Natural killer cell (primary cell): ENCODE measurements at regions of chr9 and their contacts with region 1.

Region 1: GRCh38 chr9:73451003-73451402 is 299.3 kb downstream of the ANXA1 start:
- DNase-seq: no peak
- ATAC-seq: no peak
- H3K4me3 ChIP-seq: no peak overlapping the region
- H3K4me3 Mint-ChIP-seq: no peak overlapping the region
- H3K27ac ChIP-seq: no peak overlapping the region
- H3K27ac Mint-ChIP-seq: no peak overlapping the region
- H3K4me1 ChIP-seq: no peaks in the 10 kb centered on the region
- H3K4me1 Mint-ChIP-seq: no peaks in the 10 kb centered on the region
- H3K27me3 ChIP-seq: no peaks in the 10 kb centered on the region
- H3K27me3 Mint-ChIP-seq: no peaks in the 10 kb centered on the region
- CTCF ChIP-seq: no peak

Region 2: DNA sequence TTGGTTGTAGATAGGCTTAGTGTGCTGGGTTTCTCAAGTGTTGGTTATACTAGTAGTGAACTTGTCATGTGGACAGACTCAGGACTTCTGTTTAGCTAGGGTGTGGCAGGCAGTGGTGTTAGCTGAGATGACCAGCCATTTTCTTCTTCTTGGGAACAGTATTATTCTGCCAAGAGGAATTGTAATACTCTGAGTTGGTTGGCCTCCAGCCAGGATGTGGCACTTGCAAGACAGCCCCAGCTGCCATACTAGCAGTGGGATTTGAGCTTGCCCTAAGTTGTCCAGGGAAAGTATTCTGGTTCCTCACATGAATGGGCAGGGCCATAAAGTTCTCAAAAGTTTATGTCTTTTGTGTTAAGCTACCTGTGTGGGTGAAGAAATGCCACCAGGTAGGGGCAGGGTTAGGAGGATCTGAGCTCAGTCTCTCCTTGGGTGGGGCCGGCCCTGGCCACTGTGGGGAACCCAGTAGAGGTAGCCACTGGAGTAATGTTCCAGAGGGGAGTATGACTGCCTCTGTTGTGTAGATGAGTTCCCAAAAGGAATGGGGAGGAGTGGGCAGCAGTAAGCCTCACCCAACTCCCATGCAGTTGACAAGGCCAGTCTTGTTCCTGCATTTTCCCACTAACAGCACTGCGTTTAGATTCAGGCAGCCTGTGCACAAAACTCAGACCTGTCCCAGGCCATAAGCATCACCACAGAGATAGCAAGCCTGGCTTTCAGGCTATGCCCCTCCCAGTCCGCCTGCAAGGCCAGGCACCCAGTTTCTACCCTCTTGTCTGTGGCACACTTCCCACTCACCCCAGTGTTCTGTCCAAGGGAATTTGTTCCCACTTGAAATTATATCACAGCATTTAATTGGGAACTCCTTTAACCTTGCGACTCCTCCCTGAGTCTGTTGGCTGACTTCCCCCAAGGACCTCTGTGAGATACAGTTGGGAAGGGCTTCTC is 48.6 kb before region 1 on chr9:
- intact Hi-C with region 1: loop called (anchors 10 kb)
- DNase-seq: no peak
- ATAC-seq: no peak
- H3K4me3 ChIP-seq: no peak overlapping the region
- H3K4me3 Mint-ChIP-seq: no peak overlapping the region
- H3K27ac ChIP-seq: no peak overlapping the region
- H3K27ac Mint-ChIP-seq: no peak overlapping the region
- H3K4me1 ChIP-seq: no peaks in the 10 kb centered on the region
- H3K4me1 Mint-ChIP-seq: no peaks in the 10 kb centered on the region
- H3K27me3 ChIP-seq: no peaks in the 10 kb centered on the region
- H3K27me3 Mint-ChIP-seq: no peaks in the 10 kb centered on the region
- CTCF ChIP-seq: no peak

Region 3: GRCh38 chr9:73565833-73566465 is 114.9 kb after region 1 on chr9:
- intact Hi-C with region 1: no loop called
- DNase-seq: no peak
- ATAC-seq: no peak
- H3K4me3 ChIP-seq: no peak overlapping the region
- H3K4me3 Mint-ChIP-seq: no peak overlapping the region
- H3K27ac ChIP-seq: no peak overlapping the region
- H3K27ac Mint-ChIP-seq: no peak overlapping the region
- H3K4me1 ChIP-seq: no peaks in the 10 kb centered on the region
- H3K4me1 Mint-ChIP-seq: no peaks in the 10 kb centered on the region
- H3K27me3 ChIP-seq: no peaks in the 10 kb centered on the region
- H3K27me3 Mint-ChIP-seq: no peaks in the 10 kb centered on the region
- CTCF ChIP-seq: no peak